ENCODE measurements at regions of chr10 and their contacts with region 1.

Region 1: GRCh38 chr10:36534471-36535002 is 590.9 kb upstream of the ANKRD30A start:
- DNase-seq: peak; percentile 100
- ATAC-seq: peak; percentile 82
- H3K4me3 ChIP-seq: no peak overlapping the region
- H3K27ac ChIP-seq: peak overlapping the region; percentile 83
- H3K4me1 ChIP-seq: peaks cover 63% of the 10 kb centered on the region
- H3K27me3 ChIP-seq: no peaks in the 10 kb centered on the region
- CTCF ChIP-seq: no peak

Region 2: DNA sequence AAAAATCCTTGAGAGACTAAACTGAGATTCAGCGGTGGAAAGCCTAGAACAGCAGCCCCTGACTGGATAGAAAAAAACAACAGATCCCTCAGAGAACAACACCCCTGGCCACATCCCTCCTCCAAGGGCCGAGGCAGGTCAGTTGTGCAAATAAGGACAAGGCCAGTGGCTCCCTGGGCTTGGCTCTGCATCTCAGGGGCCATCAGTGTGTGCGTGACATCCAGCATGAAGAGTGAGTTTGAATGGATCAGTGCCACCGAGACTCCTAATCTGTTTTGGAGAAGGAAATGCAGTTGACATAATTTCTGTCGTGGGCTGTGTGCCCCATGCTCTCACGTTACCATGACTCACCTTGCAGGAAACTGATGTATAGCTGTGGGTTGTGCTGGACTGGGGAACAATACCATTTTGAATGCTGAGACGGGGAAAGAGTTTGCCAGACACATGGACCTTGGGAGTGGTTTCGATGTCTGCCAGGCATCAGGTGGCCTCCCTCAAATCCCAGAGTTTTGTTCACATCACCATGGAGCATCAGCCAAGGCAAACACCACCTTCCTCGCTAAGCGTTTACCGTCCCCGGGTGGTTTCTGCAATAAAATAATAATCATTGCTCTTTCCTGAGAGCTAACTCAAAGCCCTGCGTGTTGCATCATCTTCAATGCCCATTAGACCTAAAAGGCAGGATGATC is 739.3 kb before region 1 on chr10:
- CTCF ChIA-PET with region 1: no interaction called
- POLR2A ChIA-PET with region 1: no interaction called
- intact Hi-C with region 1: loop called (anchors 2 kb)
- DNase-seq: peak; percentile 100
- ATAC-seq: peak; percentile 94
- H3K4me3 ChIP-seq: peak overlapping the region; percentile 12
- H3K27ac ChIP-seq: peak overlapping the region; percentile 80
- H3K4me1 ChIP-seq: peaks cover 46% of the 10 kb centered on the region
- H3K27me3 ChIP-seq: no peaks in the 10 kb centered on the region
- CTCF ChIP-seq: no peak

Region 3: DNA sequence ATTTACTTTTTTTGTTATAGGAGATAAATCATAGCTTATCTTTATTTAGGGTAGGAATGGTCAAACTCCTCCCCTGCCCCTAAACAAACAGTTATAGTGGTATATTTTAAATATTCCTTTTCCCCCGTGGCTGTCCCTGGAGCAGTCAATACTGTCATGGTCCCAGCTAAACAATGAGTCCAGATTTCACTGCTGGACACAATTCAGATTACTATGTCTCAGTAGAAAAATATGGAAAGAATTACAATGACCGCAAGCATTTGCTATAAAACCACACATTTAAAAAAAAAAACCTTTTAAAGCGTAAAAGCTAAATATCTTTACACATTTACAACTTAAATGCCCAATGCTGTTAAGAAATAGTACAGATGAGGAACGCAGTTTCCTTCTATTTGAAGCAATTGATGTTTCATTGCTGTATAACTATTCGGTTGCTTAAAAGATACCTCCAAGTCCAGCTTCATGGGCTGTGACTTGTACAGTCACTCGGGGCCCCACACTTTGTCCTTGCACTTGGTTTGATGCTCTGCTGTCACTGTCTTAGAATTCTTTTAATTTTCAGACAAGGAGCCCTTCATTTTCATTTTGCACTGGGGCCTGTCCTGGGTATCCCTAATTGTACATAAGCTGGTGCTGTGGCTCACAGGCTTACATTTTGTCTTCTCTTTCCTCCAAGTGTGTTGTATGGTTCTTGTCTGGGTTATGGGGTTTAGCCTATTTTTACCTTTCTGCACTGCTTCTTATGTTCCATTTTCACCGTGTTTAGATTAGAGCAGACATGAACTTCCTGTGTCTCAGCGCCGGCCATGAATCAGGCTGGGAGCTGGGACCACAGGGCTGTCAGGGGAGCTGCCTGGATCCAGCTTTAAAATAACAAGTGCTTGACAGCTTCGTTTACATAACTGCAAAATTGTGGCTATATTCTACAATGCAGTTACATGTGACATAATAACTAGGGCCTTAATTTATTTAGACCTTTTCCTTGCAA is 362.3 kb before region 1 on chr10:
- CTCF ChIA-PET with region 1: interaction called, 3 read pairs
- POLR2A ChIA-PET with region 1: no interaction called
- intact Hi-C with region 1: loop called (anchors 1 kb)
- DNase-seq: peak; percentile 99
- ATAC-seq: peak; percentile 71
- H3K4me3 ChIP-seq: peak overlapping the region; percentile 28
- H3K27ac ChIP-seq: peak overlapping the region; percentile 79
- H3K4me1 ChIP-seq: peaks cover 43% of the 10 kb centered on the region
- H3K27me3 ChIP-seq: no peaks in the 10 kb centered on the region
- CTCF ChIP-seq: no peak

Region 4: DNA sequence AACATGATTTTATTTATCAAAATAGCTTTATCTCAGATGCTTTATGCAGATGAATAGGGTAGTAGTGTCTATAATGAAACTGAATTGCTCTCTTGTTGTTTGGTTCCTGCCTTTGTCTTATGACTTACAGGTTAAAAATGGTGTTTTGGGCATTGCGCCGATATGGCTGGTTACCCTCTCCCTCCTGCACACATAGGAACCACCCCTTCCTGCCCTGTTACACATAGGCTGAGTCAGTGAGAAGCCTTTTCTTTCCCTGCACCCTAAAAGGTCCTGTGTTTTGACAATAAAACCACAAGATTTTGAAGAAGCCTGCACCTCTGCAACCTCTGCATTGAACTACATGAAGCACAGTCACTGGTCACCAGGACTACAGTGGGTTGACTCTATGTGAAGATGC is 65.0 kb before region 1 on chr10:
- CTCF ChIA-PET with region 1: no interaction called
- POLR2A ChIA-PET with region 1: no interaction called
- intact Hi-C with region 1: loop called (anchors 1 kb)
- DNase-seq: peak; percentile 96
- ATAC-seq: peak; percentile 79
- H3K4me3 ChIP-seq: no peak overlapping the region
- H3K27ac ChIP-seq: peak overlapping the region; percentile 58
- H3K4me1 ChIP-seq: peaks cover 39% of the 10 kb centered on the region
- H3K27me3 ChIP-seq: no peaks in the 10 kb centered on the region
- CTCF ChIP-seq: no peak

Region 5: GRCh38 chr10:36602374-36602773 is 67.8 kb after region 1 on chr10:
- CTCF ChIA-PET with region 1: no interaction called
- POLR2A ChIA-PET with region 1: no interaction called
- intact Hi-C with region 1: loop called (anchors 1 kb)
- DNase-seq: peak; percentile 98
- ATAC-seq: peak; percentile 71
- H3K4me3 ChIP-seq: peak overlapping the region; percentile 2; the same call in 1 of the 2 replicates
- H3K27ac ChIP-seq: peak overlapping the region; percentile 30
- H3K4me1 ChIP-seq: peaks cover 47% of the 10 kb centered on the region
- H3K27me3 ChIP-seq: no peaks in the 10 kb centered on the region
- CTCF ChIP-seq: no peak

Region 6: DNA sequence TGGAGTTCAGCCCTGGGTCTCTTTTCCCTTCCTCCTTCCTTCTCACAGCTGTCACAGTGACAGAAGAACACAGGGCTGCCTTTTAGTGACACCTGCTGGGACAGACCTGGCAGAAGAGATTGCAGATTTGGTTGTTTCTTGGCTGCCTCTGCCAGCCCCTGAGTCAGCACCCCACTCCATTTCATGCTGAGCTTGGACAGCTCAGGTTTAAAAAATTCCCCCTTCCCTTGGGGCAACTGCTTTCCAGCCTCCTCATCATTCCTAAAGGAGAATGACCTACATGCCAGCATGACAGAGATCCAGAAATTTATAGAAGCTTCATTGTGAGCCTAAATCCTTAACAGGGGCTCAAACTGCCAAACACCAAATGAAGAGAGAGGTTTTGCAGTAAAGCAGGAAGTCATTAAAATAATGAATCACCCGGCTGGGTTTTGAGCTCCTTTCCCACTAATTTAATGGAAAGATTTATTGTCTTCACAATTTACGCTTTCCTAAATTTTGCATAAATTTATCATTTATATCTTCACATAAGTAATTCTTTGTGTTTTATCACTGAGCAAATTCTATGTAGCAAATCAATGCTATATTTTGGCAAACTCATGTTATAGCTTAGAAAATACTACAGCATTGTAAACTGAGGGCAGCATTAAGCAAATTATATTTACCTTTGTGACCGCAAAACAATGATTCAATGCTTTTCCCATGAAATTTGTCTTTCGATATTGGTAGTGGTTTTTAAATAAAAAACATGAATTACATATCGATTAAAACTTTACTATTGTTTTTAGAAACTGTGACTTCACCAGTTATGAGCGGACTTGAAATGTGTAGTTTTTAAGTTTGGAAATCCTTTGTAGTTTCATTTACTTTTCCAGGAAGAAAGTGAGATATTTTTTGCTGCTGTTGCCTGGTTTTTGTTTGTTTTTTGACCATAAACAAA is 191.3 kb after region 1 on chr10:
- CTCF ChIA-PET with region 1: interaction called, 26 read pairs
- POLR2A ChIA-PET with region 1: no interaction called
- intact Hi-C with region 1: loop called (anchors 1 kb)
- DNase-seq: peak; percentile 100
- ATAC-seq: peak; percentile 91
- H3K4me3 ChIP-seq: peak overlapping the region; percentile 49
- H3K27ac ChIP-seq: peak overlapping the region; percentile 86
- H3K4me1 ChIP-seq: peaks cover 43% of the 10 kb centered on the region
- H3K27me3 ChIP-seq: no peaks in the 10 kb centered on the region
- CTCF ChIP-seq: peak; percentile 100

Region 7: GRCh38 chr10:37947526-37947925 is 1413.0 kb after region 1 on chr10:
- CTCF ChIA-PET with region 1: no interaction called
- POLR2A ChIA-PET with region 1: no interaction called
- intact Hi-C with region 1: no loop called
- DNase-seq: peak; percentile 51
- ATAC-seq: peak; percentile 27
- H3K4me3 ChIP-seq: no peak overlapping the region
- H3K27ac ChIP-seq: 0 out of 2 replicates have a peak overlapping the region, but pooled peaks have one; percentile 2
- H3K4me1 ChIP-seq: no peaks in the 10 kb centered on the region
- H3K27me3 ChIP-seq: no peaks in the 10 kb centered on the region
- CTCF ChIP-seq: no peak

Measured in PC-3 (cell line).